ENCODE measurements at regions of chr1 and their contacts with region 1.

Region 1: DNA sequence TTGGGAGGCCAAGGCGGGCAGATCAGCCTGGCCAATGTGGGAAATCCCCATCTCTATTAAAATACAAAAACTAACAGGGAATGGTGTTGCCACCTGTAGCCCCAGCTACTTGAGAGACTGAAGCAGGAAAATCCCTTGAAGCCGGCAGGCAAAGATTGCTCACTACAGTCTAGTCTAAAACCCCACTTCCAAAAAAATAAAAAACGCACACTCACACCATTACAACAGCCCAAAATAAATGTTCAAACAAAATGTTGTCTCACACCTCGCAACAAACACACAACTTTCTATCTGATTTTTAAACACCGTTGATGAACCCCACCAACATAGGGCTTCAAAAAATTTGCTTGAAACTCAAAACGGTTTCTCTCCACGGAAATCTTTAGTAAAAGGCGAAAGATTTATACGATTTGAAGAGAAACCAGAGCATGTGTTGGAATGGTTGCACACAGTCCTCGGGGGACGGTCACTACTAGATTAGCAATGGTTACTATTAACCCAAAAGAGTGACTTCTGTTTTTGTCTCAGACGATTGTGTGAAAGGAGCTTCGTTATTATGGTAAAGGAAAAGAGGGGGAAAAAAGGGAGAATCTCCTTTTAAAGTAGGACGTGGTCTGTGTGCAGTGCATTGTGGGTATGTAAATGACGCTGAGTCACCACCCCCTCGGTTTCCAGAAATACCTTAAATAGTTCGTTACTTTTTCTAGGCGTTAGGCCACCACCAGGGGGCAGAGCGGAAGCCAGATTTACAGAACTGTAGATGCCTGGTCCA is at the start of gene RNU5D-1:
- DNase-seq: peak; percentile 84 to 96 (median 90)
- ATAC-seq: peak; percentile 80 to 83
- H3K4me3 Mint-ChIP-seq: peak within 1 kb of the TSS; percentile 53 to 89 (median 80)
- H3K27ac Mint-ChIP-seq: peak within 1 kb of the TSS; percentile 96 to 100 (median 99)
- H3K4me1 Mint-ChIP-seq: peaks cover 19 to 40% (median 32%) of the 10 kb centered on the region in 4 donors
- H3K27me3 Mint-ChIP-seq: no peaks in the 10 kb centered on the region
- polyA plus RNA-seq, gene RNU5D-1: not detected

Region 2: GRCh38 chr1:44584167-44584566 is 146.8 kb before region 1 on chr1:
- POLR2A ChIA-PET with region 1: no interaction called
- DNase-seq: no peak
- ATAC-seq: no peak
- H3K4me3 Mint-ChIP-seq: no peak overlapping the region
- H3K27ac Mint-ChIP-seq: no peak overlapping the region
- H3K4me1 Mint-ChIP-seq: no peaks in the 10 kb centered on the region
- H3K27me3 Mint-ChIP-seq: peaks cover 0 to 3% (median 0%) of the 10 kb centered on the region in 5 donors

Region 3: DNA sequence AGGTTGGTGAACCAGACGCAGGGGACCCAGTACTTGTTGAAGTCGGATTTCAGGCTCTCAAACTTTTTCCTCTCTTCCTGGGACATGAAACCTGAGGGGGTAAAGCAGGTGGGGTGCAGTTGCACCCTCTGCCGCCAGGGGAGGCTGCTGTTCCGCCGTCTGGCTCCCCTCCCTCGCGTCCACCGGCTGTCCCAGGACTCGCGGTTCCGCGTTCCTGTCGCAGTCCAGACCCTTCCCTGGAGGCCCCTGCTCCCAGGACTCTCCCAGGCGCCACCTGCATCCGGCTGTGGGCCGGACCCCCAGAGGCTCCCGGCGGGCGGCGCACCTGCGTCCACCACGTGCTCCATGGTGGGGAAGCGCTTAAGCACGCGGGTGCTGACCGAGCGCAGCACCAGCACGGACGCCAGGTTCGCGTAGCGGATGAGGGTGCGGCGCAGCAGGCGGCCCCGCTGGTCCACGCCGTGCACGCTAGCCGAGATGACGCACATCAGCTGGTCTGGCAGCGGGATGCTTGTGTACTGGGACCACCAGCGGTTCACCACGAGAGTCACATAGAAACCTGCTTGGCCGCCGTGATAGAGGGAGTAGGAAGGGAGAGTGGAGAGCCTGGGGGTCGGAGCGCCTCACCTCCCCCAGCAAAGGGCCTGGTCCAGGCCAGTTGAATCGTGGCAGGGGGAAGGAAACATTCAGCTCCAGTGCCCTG is 55.4 kb after region 1 on chr1:
- POLR2A ChIA-PET with region 1: interaction called, 19 read pairs
- DNase-seq: peak; percentile 64 to 91 (median 79)
- ATAC-seq: peak; percentile 75 to 77
- H3K4me3 Mint-ChIP-seq: peak overlapping the region; percentile 69 to 84 (median 80)
- H3K27ac Mint-ChIP-seq: peak overlapping the region; percentile 35 to 95 (median 88)
- H3K4me1 Mint-ChIP-seq: peaks cover 16 to 34% (median 30%) of the 10 kb centered on the region in 4 donors
- H3K27me3 Mint-ChIP-seq: no peaks in the 10 kb centered on the region

Region 4: GRCh38 chr1:44807262-44808062 is 76.5 kb after region 1 on chr1 and contains the start of gene DYNLT4:
- POLR2A ChIA-PET with region 1: interaction called, 38 read pairs
- DNase-seq: peak; percentile 72 to 96 (median 90)
- ATAC-seq: peak; percentile 56 to 69
- H3K4me3 Mint-ChIP-seq: peak within 1 kb of the TSS; percentile 40 to 91 (median 78)
- H3K27ac Mint-ChIP-seq: peak within 1 kb of the TSS; percentile 98 to 100 (median 99)
- H3K4me1 Mint-ChIP-seq: peaks cover 42 to 87% (median 81%) of the 10 kb centered on the region in 4 donors
- H3K27me3 Mint-ChIP-seq: no peaks in the 10 kb centered on the region
- polyA plus RNA-seq, gene DYNLT4: 0.24 to 0.86 TPM in 2 of 3 donors, not detected in the other

Region 5: GRCh38 chr1:44812822-44813543 is 82.1 kb after region 1 on chr1:
- POLR2A ChIA-PET with region 1: interaction called, 62 read pairs
- DNase-seq: peak in 1 of 10 donors; percentile 45
- ATAC-seq: no peak
- H3K4me3 Mint-ChIP-seq: peak overlapping the region in 5 of 10 donors; percentile 6 to 91 (median 30)
- H3K27ac Mint-ChIP-seq: peak overlapping the region in 9 of 10 donors; percentile 37 to 100 (median 99)
- H3K4me1 Mint-ChIP-seq: peaks cover 34 to 75% (median 72%) of the 10 kb centered on the region in 4 donors
- H3K27me3 Mint-ChIP-seq: no peaks in the 10 kb centered on the region

Region 6: DNA sequence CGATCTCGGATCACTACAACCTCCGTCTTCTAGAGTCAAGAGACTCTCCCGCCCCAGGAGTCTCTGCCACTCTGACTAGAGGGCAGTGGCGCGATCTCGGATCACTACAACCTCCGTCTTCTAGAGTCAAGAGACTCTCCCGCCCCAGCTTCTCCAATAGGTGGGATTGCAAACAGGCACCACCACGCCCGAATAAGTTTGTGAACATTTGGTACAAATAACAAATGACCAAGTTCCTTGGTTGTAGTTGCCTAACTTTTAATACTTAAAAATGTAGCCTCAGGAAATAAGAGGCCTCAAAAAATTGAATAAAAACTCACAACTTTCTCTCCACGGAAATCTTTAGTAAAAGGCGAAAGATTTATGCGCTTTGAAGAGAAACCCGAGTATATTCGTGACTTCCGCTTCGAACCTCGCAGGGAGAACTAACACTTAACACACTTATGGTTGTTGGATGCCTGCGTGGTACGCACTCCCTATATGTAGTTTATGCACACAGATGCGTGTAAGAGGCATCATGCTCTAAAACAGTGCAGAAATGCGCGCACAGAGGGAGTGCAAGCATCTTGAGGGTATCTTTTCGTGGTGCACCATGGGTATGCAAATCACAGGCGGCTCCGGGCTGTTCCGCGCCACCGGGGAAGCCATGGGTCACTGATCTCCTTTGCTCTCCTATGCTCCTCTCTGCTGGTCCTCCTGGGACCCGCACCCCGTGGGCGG is 88.8 kb after region 1 on chr1:
- POLR2A ChIA-PET with region 1: interaction called, 62 read pairs
- DNase-seq: peak; percentile 61 to 98 (median 80)
- ATAC-seq: peak; percentile 78 to 79
- H3K4me3 Mint-ChIP-seq: peak overlapping the region; percentile 92 to 97 (median 94)
- H3K27ac Mint-ChIP-seq: peak overlapping the region; percentile 100
- H3K4me1 Mint-ChIP-seq: peaks cover 23 to 55% (median 42%) of the 10 kb centered on the region in 4 donors
- H3K27me3 Mint-ChIP-seq: no peaks in the 10 kb centered on the region

Region 7: GRCh38 chr1:44934791-44935190 is 203.9 kb after region 1 on chr1:
- POLR2A ChIA-PET with region 1: no interaction called
- DNase-seq: no peak
- ATAC-seq: no peak
- H3K4me3 Mint-ChIP-seq: no peak overlapping the region
- H3K27ac Mint-ChIP-seq: no peak overlapping the region
- H3K4me1 Mint-ChIP-seq: peaks cover 0 to 6% (median 0%) of the 10 kb centered on the region in 4 donors
- H3K27me3 Mint-ChIP-seq: no peaks in the 10 kb centered on the region

Region 8: GRCh38 chr1:45303582-45304310 is 572.8 kb after region 1 on chr1:
- POLR2A ChIA-PET with region 1: interaction called, 10 read pairs
- DNase-seq: peak; percentile 86 to 98 (median 96)
- ATAC-seq: peak; percentile 83 to 86
- H3K4me3 Mint-ChIP-seq: peak overlapping the region; percentile 88 to 96 (median 92)
- H3K27ac Mint-ChIP-seq: peak overlapping the region; percentile 91 to 98 (median 96)
- H3K4me1 Mint-ChIP-seq: peaks cover 5 to 37% (median 20%) of the 10 kb centered on the region in 4 donors
- H3K27me3 Mint-ChIP-seq: no peaks in the 10 kb centered on the region